ENCODE measurements at regions of chr5 and their contacts with region 1.

Region 1: GRCh38 chr5:74595143-74595925 is 45.2 kb downstream of the ENC1 start:
- DNase-seq: peak; percentile 89
- H3K4me3 ChIP-seq: no peak overlapping the region
- H3K27ac ChIP-seq: peak overlapping the region; percentile 89
- H3K4me1 ChIP-seq: peaks cover 34% of the 10 kb centered on the region
- H3K27me3 ChIP-seq: no peaks in the 10 kb centered on the region
- CTCF ChIP-seq: no peak
- POLR2A ChIP-seq: no peak

Region 2: DNA sequence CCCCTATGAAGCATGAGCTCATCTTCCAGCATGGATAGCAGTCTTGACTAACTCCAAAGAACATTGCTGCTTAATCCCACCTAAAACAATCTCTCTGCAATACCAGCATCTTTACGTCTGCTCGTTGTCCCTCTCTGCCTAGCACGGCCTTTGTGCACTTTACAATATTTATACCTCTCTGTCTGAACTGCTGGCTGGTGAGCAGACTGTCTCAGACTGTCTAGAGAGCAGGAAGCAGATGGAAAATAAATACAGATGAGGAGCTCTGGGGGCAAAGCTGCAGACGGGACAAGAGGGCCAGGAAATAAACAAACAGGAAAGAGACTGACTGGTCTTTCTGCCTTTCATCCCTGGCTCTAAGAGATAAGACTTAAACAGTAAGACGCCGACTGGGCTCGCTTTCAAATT is 179.6 kb before region 1 on chr5:
- CTCF ChIA-PET with region 1: interaction called, 3 read pairs
- POLR2A ChIA-PET with region 1: no interaction called
- dilution Hi-C with region 1: no loop called
- intact Hi-C with region 1: loop called (anchors 2 kb)
- DNase-seq: peak; percentile 90
- H3K4me3 ChIP-seq: no peak overlapping the region
- H3K27ac ChIP-seq: peak overlapping the region; percentile 63
- H3K4me1 ChIP-seq: peaks cover 27% of the 10 kb centered on the region
- H3K27me3 ChIP-seq: no peaks in the 10 kb centered on the region
- CTCF ChIP-seq: no peak
- POLR2A ChIP-seq: peak; percentile 30

Region 3: DNA sequence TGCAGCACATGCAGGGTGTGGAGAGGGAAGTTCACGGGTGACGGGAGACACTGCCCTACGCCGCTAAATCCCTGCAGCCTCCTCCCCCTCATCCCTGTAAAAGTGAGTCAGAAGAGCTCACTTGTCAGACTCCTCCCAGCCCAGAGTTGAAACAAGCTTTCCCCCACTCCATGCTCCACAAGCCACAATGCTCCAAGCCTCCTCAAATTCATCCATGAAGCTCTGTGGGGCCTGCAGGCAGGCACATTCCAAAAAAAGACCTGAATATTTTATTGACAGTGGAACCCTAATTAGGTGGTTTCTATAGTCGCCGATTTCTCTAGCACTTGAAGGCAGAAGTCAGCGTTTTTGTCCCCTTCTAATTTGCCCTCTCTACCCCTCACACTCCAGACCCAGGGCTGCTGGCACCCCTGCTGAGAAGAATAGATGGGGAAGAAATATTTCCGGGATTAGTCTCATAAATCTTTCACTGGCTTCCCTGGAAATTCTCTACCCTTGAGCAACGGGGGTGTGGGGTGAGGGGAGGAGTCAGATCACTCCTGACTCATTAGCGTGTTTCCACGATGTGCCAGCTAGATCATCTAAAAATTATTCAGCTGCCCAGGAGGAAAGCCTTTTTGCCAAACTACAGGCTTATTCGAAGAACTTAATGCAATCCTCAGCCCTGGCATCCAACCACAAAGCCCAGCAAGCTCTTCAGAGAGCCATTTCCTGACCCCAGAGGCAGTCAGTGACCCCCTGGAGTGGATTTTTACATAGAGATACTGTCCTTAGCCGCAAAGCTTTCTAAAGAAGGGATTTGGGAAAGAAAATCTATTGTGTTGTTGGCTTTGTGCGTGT is 52.0 kb before region 1 on chr5:
- CTCF ChIA-PET with region 1: no interaction called
- POLR2A ChIA-PET with region 1: no interaction called
- dilution Hi-C with region 1: no loop called
- intact Hi-C with region 1: loop called (anchors 2 kb)
- DNase-seq: peak; percentile 77
- H3K4me3 ChIP-seq: peak overlapping the region in 1 of 3 experiments; percentile 25
- H3K27ac ChIP-seq: peak overlapping the region; percentile 80
- H3K4me1 ChIP-seq: peaks cover 17% of the 10 kb centered on the region
- H3K27me3 ChIP-seq: no peaks in the 10 kb centered on the region
- CTCF ChIP-seq: no peak
- POLR2A ChIP-seq: peak; percentile 44

Region 4: DNA sequence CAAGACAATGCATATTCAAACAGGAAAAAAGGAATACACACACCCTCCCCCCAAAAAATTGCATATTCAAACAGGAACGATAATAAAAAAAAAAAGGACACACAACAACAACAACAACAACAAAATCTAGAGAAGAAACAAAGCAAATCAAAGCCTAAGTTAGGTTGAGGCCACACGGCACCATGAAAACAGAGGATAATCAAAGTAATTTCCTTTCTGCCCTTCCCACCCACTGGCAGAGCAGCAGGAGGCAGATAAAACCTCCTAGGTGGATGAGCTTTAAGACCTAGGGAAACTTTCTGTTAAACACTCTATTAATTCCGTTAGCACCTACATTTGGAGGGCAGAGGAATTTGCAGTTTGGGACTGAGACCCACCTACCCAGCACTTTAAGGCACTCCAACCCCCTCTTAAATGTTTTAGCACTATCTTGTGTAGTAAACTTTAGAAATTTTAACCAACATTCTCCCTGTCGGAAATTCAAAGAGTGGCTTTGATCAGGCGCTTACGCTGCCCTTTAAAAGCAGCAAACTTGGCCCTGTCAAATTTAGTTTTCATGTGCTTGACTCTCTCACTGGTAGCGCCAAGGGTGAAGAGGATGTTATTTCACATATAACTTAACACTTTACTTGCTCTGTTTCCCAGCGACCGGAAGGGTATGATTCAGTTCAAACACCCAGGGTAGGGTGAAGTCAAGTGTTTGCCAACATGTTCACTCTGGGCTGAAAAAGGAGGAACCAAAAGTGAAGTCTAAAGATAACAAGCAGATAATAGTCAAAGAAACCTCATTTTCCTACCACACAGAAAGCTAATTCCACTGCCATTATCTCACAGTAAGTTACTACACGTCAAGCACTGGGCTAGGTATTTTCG is 36.0 kb after region 1 on chr5:
- CTCF ChIA-PET with region 1: interaction called, 4 read pairs
- POLR2A ChIA-PET with region 1: no interaction called
- dilution Hi-C with region 1: no loop called
- intact Hi-C with region 1: loop called (anchors 1 kb)
- DNase-seq: peak; percentile 86
- H3K4me3 ChIP-seq: peak overlapping the region in 1 of 3 experiments; percentile 36
- H3K27ac ChIP-seq: peak overlapping the region; percentile 98
- H3K4me1 ChIP-seq: peaks cover 53% of the 10 kb centered on the region
- H3K27me3 ChIP-seq: no peaks in the 10 kb centered on the region
- CTCF ChIP-seq: no peak
- POLR2A ChIP-seq: no peak

Region 5: DNA sequence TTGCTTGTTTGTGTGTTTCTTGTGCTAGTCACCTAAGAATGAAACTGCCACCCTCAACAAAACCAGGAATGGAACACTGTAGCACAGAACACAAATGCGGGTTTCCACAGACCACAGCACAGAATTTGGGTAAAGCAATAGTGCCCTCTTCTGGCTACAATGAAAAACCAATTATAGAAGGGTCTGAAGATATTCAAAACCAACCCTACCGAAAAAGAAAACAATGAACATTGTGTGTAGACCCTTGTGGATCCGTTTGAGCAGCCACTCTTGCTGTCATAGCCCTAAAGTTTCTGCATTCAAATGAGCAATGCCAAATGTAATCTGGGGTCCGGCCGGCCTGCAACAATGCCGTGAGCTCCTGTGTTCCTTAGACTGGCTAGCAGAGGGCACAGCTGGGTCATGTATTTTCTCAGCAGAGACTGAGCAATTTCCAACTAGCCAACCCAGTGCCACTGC is 53.5 kb after region 1 on chr5:
- CTCF ChIA-PET with region 1: no interaction called
- POLR2A ChIA-PET with region 1: no interaction called
- dilution Hi-C with region 1: no loop called
- intact Hi-C with region 1: no loop called
- DNase-seq: peak; percentile 69
- H3K4me3 ChIP-seq: no peak overlapping the region
- H3K27ac ChIP-seq: no peak overlapping the region
- H3K4me1 ChIP-seq: peaks cover 5% of the 10 kb centered on the region
- H3K27me3 ChIP-seq: no peaks in the 10 kb centered on the region
- CTCF ChIP-seq: peak; percentile 46 to 50
- POLR2A ChIP-seq: no peak